GM12878 (cell line): ENCODE measurements at regions of chr21 and their contacts with region 1.

Region 1: GRCh38 chr21:43718872-43719747 is at the start of gene PDXK:
- DNase-seq: peak; percentile 35
- ATAC-seq: peak; percentile 69
- H3K4me3 ChIP-seq: peak within 1 kb of the TSS; percentile 88
- H3K27ac ChIP-seq: peak within 1 kb of the TSS; percentile 86
- H3K4me1 ChIP-seq: peaks cover 50% of the 10 kb centered on the region
- H3K27me3 ChIP-seq: no peaks in the 10 kb centered on the region
- CTCF ChIP-seq: peak; percentile 13 to 47 (median 15); a peak in 4 of 6 replicates
- EP300 ChIP-seq: peak; percentile 12 to 41; a peak in 1 of 4 replicates
- POLR2A ChIP-seq: peak; percentile 80
- RAD21 ChIP-seq: no peak
- polyA plus RNA-seq, gene PDXK: 3.7 to 11.4 TPM

Region 2: DNA sequence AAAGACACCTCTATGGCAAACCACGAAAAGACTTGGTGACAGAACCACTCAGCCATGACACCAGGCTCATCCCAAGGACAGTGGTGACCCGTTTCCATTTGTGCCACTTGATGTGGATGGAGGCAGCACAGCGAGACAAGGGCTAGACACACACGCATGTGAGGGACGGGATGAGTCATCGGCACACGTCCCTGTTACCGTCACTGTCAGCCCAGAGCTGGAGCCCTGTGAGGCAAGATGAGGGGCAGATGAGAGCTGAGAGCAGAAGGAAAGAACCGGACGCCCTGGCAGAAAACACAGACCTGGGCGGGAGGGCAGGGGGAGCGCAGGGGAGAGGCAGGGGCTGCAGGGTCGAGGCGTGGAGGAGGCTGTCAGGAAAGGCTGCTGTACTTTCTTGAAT is 350.0 kb before region 1 on chr21:
- CTCF ChIA-PET with region 1: no interaction called
- POLR2A ChIA-PET with region 1: no interaction called
- RAD21 ChIA-PET with region 1: no interaction called
- SMC1A ChIA-PET with region 1: no interaction called
- in situ Hi-C with region 1: no loop called
- intact Hi-C with region 1: no loop called
- DNase-seq: no peak
- ATAC-seq: peak; percentile 95
- H3K4me3 ChIP-seq: no peak overlapping the region
- H3K27ac ChIP-seq: no peak overlapping the region
- H3K4me1 ChIP-seq: peaks cover 22% of the 10 kb centered on the region
- H3K27me3 ChIP-seq: no peaks in the 10 kb centered on the region; a peak in 2 of 4 replicates
- CTCF ChIP-seq: no peak
- EP300 ChIP-seq: peak; percentile 45 to 58; a peak in 3 of 4 replicates
- POLR2A ChIP-seq: no peak
- RAD21 ChIP-seq: no peak

Region 3: GRCh38 chr21:43667191-43667904 is 51.8 kb before region 1 on chr21:
- CTCF ChIA-PET with region 1: no interaction called
- POLR2A ChIA-PET with region 1: interaction called, 4 read pairs
- RAD21 ChIA-PET with region 1: no interaction called
- SMC1A ChIA-PET with region 1: interaction called, 3 read pairs
- in situ Hi-C with region 1: no loop called
- intact Hi-C with region 1: loop called (anchors 5 kb)
- DNase-seq: no peak
- ATAC-seq: peak; percentile 87
- H3K4me3 ChIP-seq: no peak overlapping the region
- H3K27ac ChIP-seq: peak overlapping the region; percentile 20; the same call in 1 of the 2 replicates
- H3K4me1 ChIP-seq: peaks cover 15% of the 10 kb centered on the region
- H3K27me3 ChIP-seq: no peaks in the 10 kb centered on the region
- CTCF ChIP-seq: no peak
- EP300 ChIP-seq: no peak; a peak in 1 of 4 replicates
- POLR2A ChIP-seq: no peak
- RAD21 ChIP-seq: no peak

Region 4: GRCh38 chr21:43758111-43758641 is 39.1 kb after region 1 on chr21:
- CTCF ChIA-PET with region 1: no interaction called
- POLR2A ChIA-PET with region 1: no interaction called
- RAD21 ChIA-PET with region 1: no interaction called
- SMC1A ChIA-PET with region 1: no interaction called
- in situ Hi-C with region 1: no loop called
- intact Hi-C with region 1: no loop called
- DNase-seq: no peak
- ATAC-seq: no peak
- H3K4me3 ChIP-seq: no peak overlapping the region
- H3K27ac ChIP-seq: no peak overlapping the region
- H3K4me1 ChIP-seq: no peaks in the 10 kb centered on the region
- H3K27me3 ChIP-seq: no peaks in the 10 kb centered on the region
- CTCF ChIP-seq: no peak
- EP300 ChIP-seq: no peak
- POLR2A ChIP-seq: no peak
- RAD21 ChIP-seq: no peak